Activated B cell treated with CpG ODN at 0.5 μM for 24 hours (primary cell): ENCODE measurements at regions of chr2 and their contacts with region 1.

Region 1: DNA sequence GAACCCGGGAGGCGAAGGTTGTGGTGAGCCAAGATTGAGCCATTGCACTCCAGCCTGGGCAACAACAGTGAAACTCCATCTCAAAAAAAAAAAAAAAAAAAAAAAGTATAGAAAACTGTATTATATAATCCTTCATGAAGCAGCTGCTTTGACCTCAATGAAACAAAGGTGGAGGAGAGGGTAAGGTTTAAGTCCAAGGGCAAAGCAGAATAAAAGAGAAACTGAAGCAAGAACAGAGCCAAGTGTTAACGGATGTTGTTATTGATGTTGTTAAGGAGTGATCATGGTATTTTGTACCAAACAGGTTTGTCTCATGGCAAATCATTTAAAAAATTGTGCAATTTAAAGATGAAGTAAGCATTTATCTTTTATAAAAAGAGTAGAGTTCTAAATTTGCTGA is 7.4 kb downstream of the RAPH1 start:
- DNase-seq: no peak
- ATAC-seq: no peak
- H3K4me3 Mint-ChIP-seq: no peak overlapping the region
- H3K27ac Mint-ChIP-seq: no peak overlapping the region
- H3K4me1 Mint-ChIP-seq: no peaks in the 10 kb centered on the region
- H3K27me3 Mint-ChIP-seq: peaks cover 32% of the 10 kb centered on the region
- CTCF ChIP-seq: no peak

Region 2: DNA sequence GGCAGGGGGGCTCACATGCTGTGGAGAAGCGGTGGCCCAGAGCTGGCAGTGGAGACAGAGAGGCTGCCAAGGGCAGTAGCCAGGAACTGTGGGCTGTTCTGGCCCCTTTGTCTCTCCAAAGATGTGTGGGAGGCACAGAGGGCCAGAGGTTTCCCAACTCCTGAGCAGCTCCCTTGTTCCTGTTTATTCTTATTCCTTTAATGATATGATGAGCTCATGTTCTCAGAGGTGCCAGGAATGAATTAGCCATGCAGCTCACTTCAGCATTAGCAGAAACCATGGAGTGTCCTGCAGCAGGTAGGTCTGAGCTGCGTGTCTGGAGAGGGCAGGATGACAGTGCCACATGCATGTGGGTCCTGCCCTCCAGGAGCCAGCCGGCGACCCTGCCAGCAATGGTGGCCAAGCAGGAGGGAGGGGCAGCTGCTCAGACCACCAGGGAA is 1572.0 kb before region 1 on chr2:
- CTCF ChIA-PET with region 1: no interaction called
- POLR2A ChIA-PET with region 1: no interaction called
- intact Hi-C with region 1: no loop called
- DNase-seq: no peak
- ATAC-seq: no peak
- H3K4me3 Mint-ChIP-seq: no peak overlapping the region
- H3K27ac Mint-ChIP-seq: no peak overlapping the region
- H3K4me1 Mint-ChIP-seq: peaks cover 2% of the 10 kb centered on the region
- H3K27me3 Mint-ChIP-seq: peaks cover 11% of the 10 kb centered on the region
- CTCF ChIP-seq: no peak

Region 3: DNA sequence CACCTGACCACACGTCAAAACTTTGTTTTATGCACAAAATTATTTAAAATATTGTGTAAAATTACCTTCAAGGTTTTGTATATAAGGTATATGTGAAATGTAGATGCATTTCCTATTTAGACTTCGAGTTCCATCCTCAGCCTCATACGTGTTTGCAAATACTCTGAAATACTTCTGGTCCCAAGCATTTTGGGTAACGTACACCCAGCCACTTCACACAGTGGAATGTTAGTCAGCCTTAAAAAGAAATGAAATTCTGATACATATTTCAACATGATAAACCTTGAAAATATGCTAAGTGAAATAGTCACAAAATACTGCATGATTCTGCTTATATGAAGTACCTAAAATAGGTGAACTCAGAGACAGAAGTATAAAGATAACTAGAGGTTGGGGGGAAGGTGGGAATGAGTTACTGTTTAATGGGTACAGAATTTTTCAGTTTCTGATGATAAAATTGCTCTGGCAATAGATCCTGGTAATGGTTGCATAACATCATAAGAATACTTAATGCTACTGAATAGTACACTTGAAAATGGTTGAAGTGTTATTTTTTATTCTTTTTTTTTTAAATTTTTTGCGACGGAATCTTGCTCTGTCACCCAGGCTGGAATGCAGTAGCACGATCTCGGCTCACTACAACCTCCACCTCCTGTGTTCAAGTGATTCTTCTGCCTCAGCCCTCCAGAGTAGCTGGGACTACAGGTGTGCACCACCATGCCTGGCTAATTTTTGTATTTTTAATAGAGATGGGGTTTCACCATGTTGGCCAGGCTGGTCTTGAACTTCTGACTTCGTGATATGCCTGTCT is 1238.1 kb before region 1 on chr2:
- CTCF ChIA-PET with region 1: no interaction called
- POLR2A ChIA-PET with region 1: interaction called, 10 read pairs
- intact Hi-C with region 1: no loop called
- DNase-seq: no peak
- ATAC-seq: no peak
- H3K4me3 Mint-ChIP-seq: no peak overlapping the region
- H3K27ac Mint-ChIP-seq: no peak overlapping the region
- H3K4me1 Mint-ChIP-seq: no peaks in the 10 kb centered on the region
- H3K27me3 Mint-ChIP-seq: no peaks in the 10 kb centered on the region
- CTCF ChIP-seq: no peak